ENCODE measurements at regions of chr17 and their contacts with region 1.

Region 1: DNA sequence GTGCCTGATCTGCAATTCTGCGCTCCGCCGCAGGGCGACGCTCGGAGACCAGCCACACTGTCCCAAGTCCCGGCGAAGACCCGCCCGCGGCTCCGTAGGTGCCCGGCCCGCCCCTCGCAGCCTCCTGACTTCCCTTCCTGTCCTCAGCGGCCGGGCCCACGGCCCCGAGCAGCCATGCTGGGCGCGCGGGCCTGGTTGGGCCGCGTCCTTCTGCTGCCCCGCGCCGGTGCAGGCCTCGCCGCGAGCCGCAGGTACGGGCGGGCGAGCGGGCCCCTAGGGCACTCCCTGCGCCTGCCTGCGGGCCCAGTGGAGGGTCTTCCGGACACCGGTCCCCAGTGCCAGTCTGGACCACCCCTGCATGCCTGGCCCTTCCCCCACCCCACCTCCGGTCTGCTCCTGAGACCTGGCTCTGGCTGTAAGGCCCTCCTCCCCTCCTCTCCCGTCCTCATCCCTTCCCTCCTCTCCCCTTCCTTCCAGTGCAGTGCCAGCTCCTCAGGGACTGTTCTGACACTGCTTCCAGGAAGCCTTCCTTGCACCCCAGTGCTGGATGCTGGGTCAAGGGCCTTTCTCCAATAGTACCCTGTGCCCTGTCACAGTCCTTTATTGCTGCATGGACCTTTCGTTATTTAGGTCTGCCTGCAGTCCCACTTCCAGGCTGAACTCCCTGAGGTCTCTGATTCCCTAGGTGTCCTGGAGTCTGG is at the start of gene SPATA20:
- DNase-seq: peak; percentile 81
- H3K4me3 Mint-ChIP-seq: peak within 1 kb of the TSS; percentile 77
- H3K27ac Mint-ChIP-seq: peak within 1 kb of the TSS; percentile 79
- H3K4me1 Mint-ChIP-seq: peaks cover 16% of the 10 kb centered on the region
- H3K27me3 Mint-ChIP-seq: peaks cover 12% of the 10 kb centered on the region
- total RNA-seq, gene SPATA20: 20.5 and 22.5 TPM in 2 replicates

Region 2: DNA sequence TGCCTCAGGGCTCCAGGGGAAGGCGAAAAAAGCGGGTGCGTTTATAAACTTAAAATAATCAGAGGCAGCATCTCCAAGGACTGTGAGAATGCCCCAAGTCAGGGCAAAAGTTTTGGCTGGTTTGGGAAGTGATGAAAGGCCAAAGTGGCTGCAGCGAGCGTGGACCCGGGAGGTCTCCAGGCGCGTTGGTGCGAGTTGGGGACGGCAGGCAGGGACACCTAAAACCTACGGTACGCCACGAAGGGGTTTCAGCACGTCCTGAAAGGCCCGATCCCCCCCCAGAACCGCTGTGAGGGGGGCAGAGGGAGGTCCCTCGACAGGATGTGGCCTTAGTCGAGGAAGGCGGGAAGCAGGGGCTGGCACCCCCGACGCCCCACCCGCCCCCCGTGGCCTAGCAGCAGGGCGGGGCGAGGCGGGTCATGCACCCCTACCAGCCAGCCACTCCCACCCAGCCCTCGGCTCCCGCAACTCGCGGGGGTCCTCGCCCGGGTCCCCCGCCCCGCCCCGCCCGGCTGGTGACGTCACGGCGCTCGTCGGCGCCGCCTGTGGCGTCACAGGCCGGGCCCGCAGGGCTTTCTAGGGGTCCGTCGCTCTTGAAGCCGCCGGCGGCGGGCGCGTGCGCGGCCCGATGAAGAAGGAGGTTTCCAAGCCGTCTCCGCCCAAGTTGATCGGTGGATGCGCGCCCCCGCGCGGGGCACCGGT is 39.2 kb before region 1 on chr17 and contains the start of gene MYCBPAP:
- intact Hi-C with region 1: loop called (anchors 1 kb)
- DNase-seq: peak; percentile 82
- H3K4me3 Mint-ChIP-seq: peak within 1 kb of the TSS; percentile 91
- H3K27ac Mint-ChIP-seq: peak within 1 kb of the TSS; percentile 91
- H3K4me1 Mint-ChIP-seq: peaks cover 62% of the 10 kb centered on the region
- H3K27me3 Mint-ChIP-seq: peaks cover 5% of the 10 kb centered on the region
- total RNA-seq, gene MYCBPAP: 2.6 and 3.8 TPM in 2 replicates

Region 3: GRCh38 chr17:50626037-50626574 is 78.9 kb after region 1 on chr17:
- intact Hi-C with region 1: loop called (anchors 1 kb)
- DNase-seq: peak; percentile 38
- H3K4me3 Mint-ChIP-seq: no peak overlapping the region
- H3K27ac Mint-ChIP-seq: no peak overlapping the region
- H3K4me1 Mint-ChIP-seq: peaks cover 4% of the 10 kb centered on the region
- H3K27me3 Mint-ChIP-seq: peaks cover 40% of the 10 kb centered on the region

Region 4: DNA sequence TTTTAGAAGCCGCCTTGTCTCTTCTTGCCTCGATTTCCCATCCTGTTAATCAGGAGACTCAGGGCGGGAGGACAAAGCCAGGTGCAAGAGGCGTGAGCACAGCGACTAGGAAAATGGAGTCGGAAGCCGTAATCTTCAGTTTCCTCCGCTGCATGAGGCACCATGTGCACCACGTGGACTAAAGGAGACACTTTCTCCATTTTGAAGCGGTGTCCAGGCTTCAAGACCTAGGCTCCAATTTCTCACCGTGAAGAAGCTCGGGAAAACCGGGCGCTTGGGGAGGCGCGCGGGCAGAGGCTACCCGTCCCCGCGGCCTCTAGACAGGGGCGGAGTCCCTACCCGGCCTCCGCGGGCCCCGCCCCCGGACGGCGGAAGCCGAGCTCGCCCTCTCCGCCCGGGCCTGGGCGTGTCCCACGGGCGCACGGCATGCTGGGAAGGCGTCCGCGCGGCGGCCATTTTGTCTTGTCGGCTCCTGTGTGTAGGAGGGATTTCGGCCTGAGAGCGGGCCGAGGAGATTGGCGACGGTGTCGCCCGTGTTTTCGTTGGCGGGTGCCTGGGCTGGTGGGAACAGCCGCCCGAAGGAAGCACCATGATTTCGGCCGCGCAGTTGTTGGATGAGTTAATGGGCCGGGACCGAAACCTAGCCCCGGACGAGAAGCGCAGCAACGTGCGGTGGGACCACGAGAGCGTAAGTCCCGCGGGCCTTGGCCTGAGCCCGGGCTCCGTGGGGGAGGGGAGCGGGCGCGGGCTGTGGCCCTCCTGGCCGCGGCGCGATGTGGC is 172.1 kb after region 1 on chr17 and contains the start of gene LUC7L3:
- intact Hi-C with region 1: loop called (anchors 1 kb)
- DNase-seq: peak; percentile 95
- H3K4me3 Mint-ChIP-seq: peak within 1 kb of the TSS; percentile 88
- H3K27ac Mint-ChIP-seq: peak within 1 kb of the TSS; percentile 98
- H3K4me1 Mint-ChIP-seq: peaks cover 28% of the 10 kb centered on the region
- H3K27me3 Mint-ChIP-seq: no peaks in the 10 kb centered on the region
- total RNA-seq, gene LUC7L3: 118 and 123 TPM in 2 replicates

Region 5: DNA sequence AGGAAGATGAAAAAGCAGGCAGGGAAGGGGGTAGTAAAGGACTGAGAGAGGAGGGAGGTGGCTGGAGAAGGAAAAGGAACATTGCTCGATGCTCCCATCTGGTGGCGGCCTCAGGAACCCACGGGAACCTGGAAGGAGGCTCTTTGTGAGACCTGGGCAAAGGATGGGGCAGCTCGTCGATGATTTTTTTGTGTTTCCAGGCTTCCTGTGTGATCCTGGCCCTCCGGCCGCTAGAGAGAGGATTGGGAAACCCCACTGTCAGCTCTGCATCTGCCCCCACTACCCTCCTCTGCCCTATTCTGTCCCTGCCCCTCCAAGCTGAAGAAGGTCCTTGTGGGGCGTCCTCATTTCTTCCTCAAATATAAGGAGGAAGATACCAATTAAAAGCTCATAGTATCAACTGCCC is 294.8 kb after region 1 on chr17:
- intact Hi-C with region 1: loop called (anchors 1 kb)
- DNase-seq: no peak
- H3K4me3 Mint-ChIP-seq: no peak overlapping the region
- H3K27ac Mint-ChIP-seq: no peak overlapping the region
- H3K4me1 Mint-ChIP-seq: no peaks in the 10 kb centered on the region
- H3K27me3 Mint-ChIP-seq: no peaks in the 10 kb centered on the region

Measured in activated T-helper 1 cell treated with anti-CD3 and anti-CD28 coated beads, Interleukin-12 subunit alpha, Interleukin-12 subunit beta, Interleukin-2, Interleukin-4 antibody, amounts not matched to agents 30 ng/mL and 10 ng/mL and 1 ng/mL, durations not matched to agents 14 hours and 24 hours and 36 hours (primary cell).